ENCODE measurements at regions of chr19 and their contacts with region 1.

Region 1: DNA sequence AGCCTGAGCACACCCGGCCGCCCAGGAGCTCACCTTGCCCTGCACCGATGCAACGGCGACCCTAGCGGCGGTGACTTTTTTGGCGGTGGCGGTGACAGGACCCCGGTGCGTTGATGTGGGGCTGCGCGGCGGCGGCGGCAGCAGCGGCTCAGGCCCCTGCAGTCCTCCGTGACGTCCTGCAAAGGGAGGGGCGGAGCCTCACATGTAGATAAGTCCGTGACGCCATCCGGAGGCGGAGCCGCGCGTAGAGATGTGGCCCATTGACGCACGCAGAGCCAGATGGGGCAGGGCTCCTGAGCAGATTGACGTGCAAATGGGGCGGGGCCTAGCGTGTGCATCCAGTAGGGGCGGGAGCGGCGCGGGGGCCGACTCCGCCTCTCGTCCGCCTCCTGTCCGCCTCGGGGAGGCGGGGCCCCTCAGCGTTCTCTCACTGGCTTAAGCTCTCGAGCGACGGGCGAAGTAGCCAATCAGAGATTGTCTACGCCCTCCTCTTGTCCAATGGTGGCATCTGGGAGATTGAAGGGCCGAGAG is at the start of gene RAB3A:
- DNase-seq: peak; percentile 99 to 100 (median 99)
- H3K4me3 ChIP-seq: peak within 1 kb of the TSS; percentile 94
- H3K4me3 Mint-ChIP-seq: peak within 1 kb of the TSS; percentile 93 to 98 (median 96)
- H3K27ac ChIP-seq: peak within 1 kb of the TSS; percentile 78
- H3K27ac Mint-ChIP-seq: peak within 1 kb of the TSS; percentile 81 to 99 (median 97)
- H3K4me1 ChIP-seq: peaks cover 17% of the 10 kb centered on the region
- H3K4me1 Mint-ChIP-seq: peaks cover 16 to 36% (median 22%) of the 10 kb centered on the region in 3 donors
- H3K27me3 ChIP-seq: peaks cover 5% of the 10 kb centered on the region
- H3K27me3 Mint-ChIP-seq: peaks cover 3 to 6% of the 10 kb centered on the region in 2 donors
- total RNA-seq, gene RAB3A: 2.9 to 3.8 TPM

Region 2: DNA sequence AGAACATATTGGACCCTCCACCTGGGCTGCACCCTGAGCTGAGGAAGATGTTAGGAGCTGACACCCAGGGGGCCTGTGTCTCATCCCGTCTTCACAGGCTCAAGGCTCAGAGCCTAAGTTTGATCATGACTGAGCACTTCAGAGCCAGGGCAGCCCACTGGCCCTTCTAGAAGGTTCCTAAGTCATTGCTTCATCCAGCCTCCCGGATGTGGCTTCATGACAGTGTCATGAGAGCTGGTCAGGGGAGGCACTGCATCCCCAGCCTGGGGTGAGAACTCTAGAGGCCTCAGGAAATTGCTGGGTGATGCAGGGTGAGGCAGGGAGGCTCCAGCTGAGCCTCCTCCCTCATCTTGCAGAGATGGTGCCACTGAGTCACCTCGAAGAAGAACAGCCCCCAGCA is 75.9 kb before region 1 on chr19:
- CTCF ChIA-PET with region 1: no interaction called
- POLR2A ChIA-PET with region 1: no interaction called
- DNase-seq: no peak
- H3K4me3 ChIP-seq: no peak overlapping the region
- H3K4me3 Mint-ChIP-seq: no peak overlapping the region
- H3K27ac ChIP-seq: peak overlapping the region; percentile 24
- H3K27ac Mint-ChIP-seq: peak overlapping the region in 5 of 8 donors; percentile 21 to 79 (median 74)
- H3K4me1 ChIP-seq: no peaks in the 10 kb centered on the region
- H3K4me1 Mint-ChIP-seq: peaks cover 0 to 10% (median 2%) of the 10 kb centered on the region in 3 donors
- H3K27me3 ChIP-seq: no peaks in the 10 kb centered on the region
- H3K27me3 Mint-ChIP-seq: no peaks in the 10 kb centered on the region

Region 3: GRCh38 chr19:18192673-18193387 is 11.1 kb before region 1 on chr19 and contains the start of gene MPV17L2:
- CTCF ChIA-PET with region 1: interaction called, 24 read pairs
- POLR2A ChIA-PET with region 1: interaction called, 26 read pairs
- DNase-seq: peak; percentile 98 to 99 (median 99)
- H3K4me3 ChIP-seq: peak within 1 kb of the TSS; percentile 74
- H3K4me3 Mint-ChIP-seq: peak within 1 kb of the TSS; percentile 82 to 95 (median 89)
- H3K27ac ChIP-seq: peak within 1 kb of the TSS; percentile 71
- H3K27ac Mint-ChIP-seq: peak within 1 kb of the TSS; percentile 76 to 98 (median 96)
- H3K4me1 ChIP-seq: peaks cover 16% of the 10 kb centered on the region
- H3K4me1 Mint-ChIP-seq: peaks cover 21 to 28% (median 22%) of the 10 kb centered on the region in 3 donors
- H3K27me3 ChIP-seq: no peaks in the 10 kb centered on the region
- H3K27me3 Mint-ChIP-seq: peaks cover 0 to 3% of the 10 kb centered on the region in 2 donors
- total RNA-seq, gene MPV17L2: 24.2 to 24.6 TPM

Region 4: DNA sequence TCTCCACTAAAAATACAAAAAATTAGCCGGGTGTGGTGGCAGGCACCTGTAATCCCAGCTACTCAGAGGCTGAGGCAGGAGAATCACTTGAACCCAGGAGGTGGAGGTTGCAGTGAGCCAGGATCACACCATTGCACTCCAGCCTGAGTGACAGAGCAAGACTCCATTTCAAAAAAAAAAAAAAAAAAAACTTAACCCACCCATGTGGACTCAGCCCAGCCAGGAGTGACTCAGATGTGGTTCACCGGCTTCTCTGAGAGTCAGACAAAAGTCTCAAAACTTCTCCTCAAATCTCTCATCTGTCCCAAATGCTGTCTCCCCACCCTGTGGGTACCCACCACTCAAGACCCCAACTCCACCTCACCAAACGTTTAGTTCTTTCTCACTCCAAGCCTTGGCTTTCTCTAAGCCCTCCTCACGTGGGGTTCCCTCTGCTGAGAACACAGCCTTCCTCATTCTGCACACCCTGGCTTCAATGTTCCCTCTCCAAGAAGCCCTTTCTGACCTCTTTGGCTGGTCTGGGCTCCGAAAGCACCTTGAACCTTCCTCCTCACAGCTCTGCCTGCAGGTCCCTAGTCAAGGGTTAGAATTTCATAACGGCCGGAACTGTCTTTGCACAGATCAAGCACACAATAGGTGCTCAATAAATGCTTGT is 11.0 kb after region 1 on chr19:
- CTCF ChIA-PET with region 1: no interaction called
- POLR2A ChIA-PET with region 1: no interaction called
- DNase-seq: no peak
- H3K4me3 ChIP-seq: no peak overlapping the region
- H3K4me3 Mint-ChIP-seq: no peak overlapping the region
- H3K27ac ChIP-seq: no peak overlapping the region
- H3K27ac Mint-ChIP-seq: no peak overlapping the region
- H3K4me1 ChIP-seq: no peaks in the 10 kb centered on the region
- H3K4me1 Mint-ChIP-seq: no peaks in the 10 kb centered on the region
- H3K27me3 ChIP-seq: no peaks in the 10 kb centered on the region
- H3K27me3 Mint-ChIP-seq: peaks cover 6 to 9% of the 10 kb centered on the region in 2 donors

Region 5: GRCh38 chr19:18239303-18239702 is 35.4 kb after region 1 on chr19:
- CTCF ChIA-PET with region 1: no interaction called
- POLR2A ChIA-PET with region 1: no interaction called
- DNase-seq: no peak
- H3K4me3 ChIP-seq: no peak overlapping the region
- H3K4me3 Mint-ChIP-seq: no peak overlapping the region
- H3K27ac ChIP-seq: no peak overlapping the region
- H3K27ac Mint-ChIP-seq: no peak overlapping the region
- H3K4me1 ChIP-seq: no peaks in the 10 kb centered on the region
- H3K4me1 Mint-ChIP-seq: no peaks in the 10 kb centered on the region
- H3K27me3 ChIP-seq: no peaks in the 10 kb centered on the region
- H3K27me3 Mint-ChIP-seq: peaks cover 19 to 32% of the 10 kb centered on the region in 2 donors